Calu3 (cell line): ENCODE measurements at regions of chr5 and their contacts with region 1.

Region 1: GRCh38 chr5:135246923-135247795 is 151.9 kb downstream of the MACROH2A1 start:
- DNase-seq: peak; percentile 45
- H3K4me3 Mint-ChIP-seq: peak overlapping the region; percentile 27
- H3K27ac Mint-ChIP-seq: no peak overlapping the region
- H3K4me1 Mint-ChIP-seq: peaks cover 23% of the 10 kb centered on the region
- H3K27me3 Mint-ChIP-seq: no peaks in the 10 kb centered on the region
- CTCF ChIP-seq: no peak

Region 2: GRCh38 chr5:134225618-134226440 is 1021.3 kb before region 1 on chr5 and contains the start of gene PPP2CA:
- CTCF ChIA-PET with region 1: no interaction called
- intact Hi-C with region 1: no loop called
- DNase-seq: peak; percentile 99
- H3K4me3 Mint-ChIP-seq: peak within 1 kb of the TSS; percentile 93
- H3K27ac Mint-ChIP-seq: peak within 1 kb of the TSS; percentile 94
- H3K4me1 Mint-ChIP-seq: peaks cover 37% of the 10 kb centered on the region
- H3K27me3 Mint-ChIP-seq: no peaks in the 10 kb centered on the region
- CTCF ChIP-seq: peak; percentile 21
- total RNA-seq, gene PPP2CA: 242 and 260 TPM in 2 replicates

Region 3: DNA sequence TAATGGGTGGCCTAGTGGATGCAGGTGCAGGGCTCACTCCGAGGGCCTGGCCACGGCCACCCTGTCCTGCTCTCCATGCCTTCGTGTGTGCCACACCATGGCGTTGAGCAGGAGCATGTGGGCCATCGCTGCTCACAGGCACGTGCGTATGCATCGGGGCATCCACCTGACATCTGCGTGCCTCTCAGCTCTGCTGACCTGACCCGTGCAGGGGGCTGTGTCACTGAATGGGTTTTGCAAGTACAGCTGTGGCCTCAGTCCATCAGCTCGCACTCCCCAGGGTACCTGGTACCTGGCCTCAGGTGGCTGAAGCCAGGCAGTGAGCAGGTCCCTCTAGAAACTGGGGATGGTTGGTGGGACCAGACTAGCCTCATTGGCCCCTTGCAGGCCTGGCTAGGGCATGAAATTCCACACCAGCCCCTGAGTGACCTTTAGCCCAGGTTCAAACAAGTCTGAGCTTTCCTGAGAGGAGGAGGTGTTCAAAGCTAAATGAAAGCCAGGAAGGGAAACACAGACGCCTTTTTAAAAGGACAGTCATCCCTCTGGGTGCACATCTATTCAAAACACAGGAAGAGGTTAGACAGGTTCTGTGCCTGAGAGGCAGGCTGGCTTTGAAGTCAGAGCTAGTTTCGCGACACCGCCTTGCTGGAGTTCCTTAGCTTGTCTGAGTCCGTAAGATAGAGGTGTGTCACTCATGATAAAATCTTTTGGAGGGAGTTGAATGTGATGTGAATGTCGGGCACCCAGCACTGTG is 77.9 kb after region 1 on chr5:
- CTCF ChIA-PET with region 1: no interaction called
- intact Hi-C with region 1: loop called (anchors 5 kb)
- DNase-seq: no peak
- H3K4me3 Mint-ChIP-seq: no peak overlapping the region
- H3K27ac Mint-ChIP-seq: no peak overlapping the region
- H3K4me1 Mint-ChIP-seq: no peaks in the 10 kb centered on the region
- H3K27me3 Mint-ChIP-seq: peaks cover 27% of the 10 kb centered on the region
- CTCF ChIP-seq: no peak